MCF 10A (cell line): ENCODE measurements at regions of chr9 and their contacts with region 1.

Region 1: GRCh38 chr9:115013998-115014397 is 83.6 kb upstream of the TNFSF8 start:
- DNase-seq: peak; percentile 84
- H3K4me3 Mint-ChIP-seq: no peak overlapping the region
- H3K27ac Mint-ChIP-seq: no peak overlapping the region
- H3K4me1 Mint-ChIP-seq: peaks cover 17% of the 10 kb centered on the region
- H3K27me3 Mint-ChIP-seq: peaks cover 14% of the 10 kb centered on the region
- CTCF ChIP-seq: peak; percentile 75

Region 2: GRCh38 chr9:114662081-114662989 is 351.7 kb before region 1 on chr9:
- CTCF ChIA-PET with region 1: interaction called, 25 read pairs
- POLR2A ChIA-PET with region 1: no interaction called
- intact Hi-C with region 1: loop called (anchors 1 kb)
- DNase-seq: peak; percentile 64
- H3K4me3 Mint-ChIP-seq: no peak overlapping the region
- H3K27ac Mint-ChIP-seq: no peak overlapping the region
- H3K4me1 Mint-ChIP-seq: peaks cover 8% of the 10 kb centered on the region
- H3K27me3 Mint-ChIP-seq: no peaks in the 10 kb centered on the region
- CTCF ChIP-seq: peak; percentile 88

Region 3: DNA sequence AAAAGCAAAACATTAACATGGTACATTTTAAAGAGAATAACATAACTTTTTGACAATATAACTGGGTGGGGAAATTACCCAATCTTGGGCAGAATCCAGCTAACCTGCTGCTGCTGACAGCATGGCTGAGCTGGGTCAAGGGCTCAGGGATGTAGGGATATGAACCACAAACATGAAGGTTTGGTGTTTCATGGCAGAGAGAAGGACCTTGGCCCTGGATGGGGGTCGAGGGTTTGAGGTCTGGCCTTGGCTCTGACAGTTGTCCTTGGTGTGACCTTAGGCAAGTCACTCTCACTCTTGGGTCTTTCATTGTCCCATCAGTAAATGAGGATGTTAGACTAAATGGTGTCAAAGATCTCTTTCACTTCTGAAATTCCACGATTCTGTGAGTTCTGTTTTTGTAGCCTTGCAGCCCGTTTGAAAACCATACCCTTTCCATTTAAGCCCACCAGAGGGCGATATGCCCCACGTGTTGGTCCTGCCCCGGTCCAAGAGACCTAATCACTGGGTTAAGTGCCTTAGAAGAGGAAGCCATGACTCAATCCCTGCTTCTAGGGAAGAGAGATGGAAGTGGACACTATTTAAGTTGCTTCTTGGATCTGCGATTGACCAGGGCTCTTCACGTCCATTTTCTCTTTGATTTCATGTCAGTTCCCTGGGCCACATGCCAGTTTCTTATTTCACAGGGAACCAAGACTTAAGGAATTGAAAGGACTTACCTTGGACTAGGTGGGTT is 275.2 kb before region 1 on chr9:
- CTCF ChIA-PET with region 1: interaction called, 37 read pairs
- POLR2A ChIA-PET with region 1: no interaction called
- intact Hi-C with region 1: loop called (anchors 1 kb)
- DNase-seq: peak; percentile 87
- H3K4me3 Mint-ChIP-seq: no peak overlapping the region
- H3K27ac Mint-ChIP-seq: no peak overlapping the region
- H3K4me1 Mint-ChIP-seq: peaks cover 23% of the 10 kb centered on the region
- H3K27me3 Mint-ChIP-seq: no peaks in the 10 kb centered on the region
- CTCF ChIP-seq: peak; percentile 85

Region 4: DNA sequence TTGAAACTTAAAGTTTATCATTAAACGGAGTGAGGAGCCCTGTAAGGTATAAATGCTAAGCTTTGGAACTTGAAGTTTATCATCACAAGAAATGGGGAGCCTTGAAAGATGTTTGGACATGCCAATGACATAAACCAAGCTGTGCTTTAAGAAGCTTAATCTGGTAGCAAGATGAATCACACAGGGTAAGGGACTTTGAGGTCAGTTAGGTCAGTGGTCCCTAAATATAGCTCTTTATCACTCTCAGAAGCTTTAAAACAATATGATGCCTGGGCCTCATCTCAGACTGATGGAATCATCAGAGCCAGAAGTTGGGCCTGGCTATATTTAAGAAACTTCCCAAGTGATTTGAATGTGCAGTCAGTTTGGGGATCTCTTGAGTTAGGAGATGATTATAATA is 18.3 kb after region 1 on chr9:
- CTCF ChIA-PET with region 1: interaction called, 20 read pairs
- POLR2A ChIA-PET with region 1: no interaction called
- intact Hi-C with region 1: no loop called
- DNase-seq: no peak
- H3K4me3 Mint-ChIP-seq: no peak overlapping the region
- H3K27ac Mint-ChIP-seq: no peak overlapping the region
- H3K4me1 Mint-ChIP-seq: peaks cover 28% of the 10 kb centered on the region
- H3K27me3 Mint-ChIP-seq: no peaks in the 10 kb centered on the region
- CTCF ChIP-seq: no peak

Region 5: DNA sequence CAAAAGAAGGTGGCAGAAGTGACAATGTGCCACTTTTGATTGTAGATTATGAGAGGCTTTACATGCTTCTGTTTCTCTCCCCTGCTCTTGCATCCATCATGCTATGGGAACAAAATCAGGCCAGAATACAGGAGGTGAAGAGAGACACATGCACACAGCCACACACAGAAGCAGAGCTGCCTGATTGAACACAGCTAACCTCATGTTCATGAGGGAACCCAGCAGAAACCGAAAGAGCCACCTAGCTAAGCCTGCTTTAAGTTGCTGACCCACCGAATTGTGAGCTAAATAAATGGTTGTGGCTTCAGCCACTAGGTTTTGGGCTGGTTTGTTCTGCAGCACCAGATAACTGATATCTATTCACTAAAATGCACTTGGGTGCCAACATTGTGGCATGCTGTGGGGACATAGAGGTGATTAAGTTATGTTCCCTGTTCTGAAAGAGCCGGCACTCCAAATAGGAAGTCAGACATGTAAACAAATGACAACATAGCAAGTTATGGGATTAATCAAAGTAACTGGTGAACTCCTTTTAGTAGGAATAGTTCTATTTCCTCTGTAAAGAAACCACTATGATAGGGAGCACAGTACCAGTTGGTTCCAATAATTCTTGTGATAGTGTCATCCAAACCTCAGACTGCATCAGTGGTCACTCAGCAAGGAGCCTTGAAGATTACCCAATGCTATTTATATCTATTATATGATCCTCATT is 197.6 kb after region 1 on chr9:
- CTCF ChIA-PET with region 1: interaction called, 3 read pairs
- POLR2A ChIA-PET with region 1: no interaction called
- intact Hi-C with region 1: loop called (anchors 5 kb)
- DNase-seq: no peak
- H3K4me3 Mint-ChIP-seq: no peak overlapping the region
- H3K27ac Mint-ChIP-seq: no peak overlapping the region
- H3K4me1 Mint-ChIP-seq: peaks cover 16% of the 10 kb centered on the region
- H3K27me3 Mint-ChIP-seq: no peaks in the 10 kb centered on the region
- CTCF ChIP-seq: no peak

Region 6: GRCh38 chr9:115240676-115241075 is 226.7 kb after region 1 on chr9:
- CTCF ChIA-PET with region 1: no interaction called
- POLR2A ChIA-PET with region 1: no interaction called
- intact Hi-C with region 1: no loop called
- DNase-seq: no peak
- H3K4me3 Mint-ChIP-seq: no peak overlapping the region
- H3K27ac Mint-ChIP-seq: no peak overlapping the region
- H3K4me1 Mint-ChIP-seq: peaks cover 17% of the 10 kb centered on the region
- H3K27me3 Mint-ChIP-seq: no peaks in the 10 kb centered on the region
- CTCF ChIP-seq: no peak